Heart left ventricle (tissue), 16 donors: ENCODE measurements at regions of chr4 and their contacts with region 1.

Region 1: DNA sequence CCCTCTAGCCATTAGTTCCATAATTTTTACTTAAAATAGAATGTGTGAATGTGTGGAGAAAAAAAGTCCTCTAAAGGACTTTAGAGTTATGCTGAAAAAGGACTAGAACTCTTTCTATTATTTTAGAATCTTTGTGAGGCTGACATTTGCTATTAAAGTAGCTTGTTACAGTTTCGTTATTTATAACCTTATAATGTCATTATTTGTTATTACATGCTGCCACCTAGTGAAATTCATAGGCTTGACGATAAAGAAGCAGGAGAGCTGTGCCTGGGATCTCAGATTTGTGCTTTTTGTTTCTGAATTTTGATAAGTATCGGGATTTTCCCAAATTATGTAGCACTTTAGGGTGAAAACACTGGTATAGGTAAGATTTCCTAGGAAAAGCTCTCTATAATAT is 38.5 kb upstream of the TAPT1 start:
- DNase-seq: no peak
- ATAC-seq: peak; percentile 35 to 83 (median 58)
- H3K4me3 ChIP-seq: no peak overlapping the region
- H3K27ac ChIP-seq: no peak overlapping the region
- H3K4me1 ChIP-seq: peaks cover 0 to 13% (median 1%) of the 10 kb centered on the region in 12 donors
- H3K27me3 ChIP-seq: no peaks in the 10 kb centered on the region
- CTCF ChIP-seq: peak; percentile 36 to 79 (median 70)
- POLR2A ChIP-seq: no peak

Region 2: DNA sequence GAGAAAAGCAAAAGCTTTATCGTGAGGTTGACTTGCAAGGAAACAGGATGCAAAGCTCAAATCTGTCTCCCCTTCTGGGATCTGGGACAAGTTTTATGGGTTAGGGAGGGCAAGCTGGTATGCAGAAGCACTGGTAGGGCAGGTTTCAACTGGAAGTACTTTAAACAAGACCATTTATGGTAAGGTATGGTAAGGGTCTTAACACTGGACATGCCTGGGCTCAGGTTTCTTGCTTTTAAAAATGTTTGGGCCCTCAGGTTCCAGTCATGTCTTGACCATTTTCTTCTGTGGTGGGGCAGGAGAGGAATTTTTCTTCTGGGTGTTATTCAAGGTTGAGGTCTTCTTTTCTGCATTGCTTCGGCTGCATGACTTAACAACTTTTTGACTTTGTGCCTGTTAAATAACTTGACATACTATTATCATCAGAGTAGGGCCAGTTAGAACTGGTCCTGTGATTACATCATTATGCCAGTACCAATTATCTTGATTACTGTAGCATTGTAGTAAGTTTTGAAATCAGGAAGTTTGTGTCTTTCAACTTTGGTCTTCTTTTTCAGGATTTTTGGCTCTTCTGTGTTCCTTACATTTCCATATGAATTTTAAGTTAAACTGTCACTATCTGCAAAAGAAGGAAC is 453.0 kb before region 1 on chr4:
- intact Hi-C with region 1: loop called in 2 of 10 experiments (anchors 10 kb)
- DNase-seq: no peak
- ATAC-seq: no peak
- H3K4me3 ChIP-seq: no peak overlapping the region
- H3K27ac ChIP-seq: no peak overlapping the region
- H3K4me1 ChIP-seq: peaks cover 0 to 32% (median 0%) of the 10 kb centered on the region in 12 donors
- H3K27me3 ChIP-seq: no peaks in the 10 kb centered on the region
- CTCF ChIP-seq: no peak
- POLR2A ChIP-seq: no peak

Region 3: GRCh38 chr4:15882675-15883086 is 382.1 kb before region 1 on chr4:
- intact Hi-C with region 1: loop called in 8 of 10 experiments (anchors 2 to 10 kb)
- DNase-seq: peak in 4 of 5 donors; percentile 39 to 53 (median 42)
- ATAC-seq: peak; percentile 73 to 89 (median 85)
- H3K4me3 ChIP-seq: no peak overlapping the region
- H3K27ac ChIP-seq: no peak overlapping the region
- H3K4me1 ChIP-seq: peaks cover 0 to 3% (median 0%) of the 10 kb centered on the region in 12 donors
- H3K27me3 ChIP-seq: no peaks in the 10 kb centered on the region
- CTCF ChIP-seq: peak; percentile 74 to 92 (median 88)
- POLR2A ChIP-seq: no peak

Region 4: DNA sequence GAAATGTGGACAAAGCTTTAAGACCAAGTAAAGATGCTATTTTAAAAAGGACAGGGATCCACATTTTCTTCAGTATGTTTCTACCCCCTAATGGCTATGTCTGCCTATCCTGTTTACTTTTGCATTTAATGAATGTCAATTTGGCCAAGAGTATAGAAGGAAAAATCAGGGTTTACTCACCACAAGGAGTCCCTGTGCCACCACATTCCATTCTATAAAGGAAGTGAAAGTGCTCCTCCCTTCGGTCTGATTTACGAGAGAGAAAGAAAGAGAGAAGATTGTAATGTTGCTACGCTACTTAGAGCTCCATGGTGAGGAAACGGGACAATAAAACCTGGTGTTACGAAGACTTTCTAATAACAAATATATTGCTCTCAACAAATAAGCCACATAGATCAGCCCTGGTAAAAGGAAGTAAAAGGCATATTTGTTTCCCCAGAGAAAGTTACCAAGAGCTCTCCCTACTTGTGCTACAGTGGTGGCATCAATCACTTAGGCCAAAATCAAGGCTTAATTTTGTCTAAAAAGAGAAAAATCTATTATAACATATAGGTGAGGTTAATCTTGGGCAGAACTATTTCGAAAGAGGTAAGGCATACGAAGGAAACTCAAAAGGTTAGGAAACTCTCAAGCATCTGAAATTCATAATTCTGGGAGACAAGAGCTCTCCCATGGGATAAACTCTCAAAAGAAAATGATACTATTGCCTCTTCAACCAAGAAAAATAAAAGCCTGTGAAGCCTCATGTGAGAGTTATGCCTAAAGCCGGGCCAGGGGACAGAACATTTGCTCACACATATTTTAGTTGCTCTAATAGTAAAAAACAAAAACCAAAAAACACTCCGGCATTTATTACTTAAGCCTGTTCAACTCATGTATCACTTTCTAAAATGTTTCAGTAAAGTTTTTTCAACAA is 68.1 kb before region 1 on chr4:
- intact Hi-C with region 1: loop called (anchors 5 to 10 kb)
- DNase-seq: no peak
- ATAC-seq: peak; percentile 78 to 91 (median 88)
- H3K4me3 ChIP-seq: peak overlapping the region in 10 of 12 donors; percentile 11 to 49 (median 28)
- H3K27ac ChIP-seq: peak overlapping the region in 11 of 12 donors; percentile 12 to 66 (median 42)
- H3K4me1 ChIP-seq: peaks cover 0 to 57% (median 37%) of the 10 kb centered on the region in 12 donors
- H3K27me3 ChIP-seq: no peaks in the 10 kb centered on the region
- CTCF ChIP-seq: peak in 10 of 12 donors; percentile 0 to 66 (median 48)
- POLR2A ChIP-seq: no peak

Region 5: DNA sequence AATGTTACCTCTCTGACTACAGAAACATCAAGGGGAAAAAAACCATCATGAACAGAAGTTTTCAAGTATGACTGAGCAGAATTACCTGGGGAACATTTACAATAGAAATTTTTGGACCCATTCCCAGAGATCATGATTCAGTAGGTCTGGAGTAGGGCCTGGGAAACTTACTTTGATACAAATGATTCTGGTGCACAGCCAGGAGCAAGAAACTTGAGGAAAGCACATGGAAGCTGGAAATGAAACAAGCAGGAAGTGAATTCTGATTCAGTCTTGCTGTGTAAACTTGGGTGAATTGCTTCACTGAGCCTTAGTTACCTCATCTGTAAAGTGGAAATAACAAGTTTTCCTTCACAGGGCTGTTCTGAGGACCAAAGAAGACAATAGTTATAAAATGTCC is 154.0 kb after region 1 on chr4:
- intact Hi-C with region 1: no loop called
- DNase-seq: peak in 1 of 5 donors; percentile 19
- ATAC-seq: peak in 2 of 4 donors; percentile 54 to 87
- H3K4me3 ChIP-seq: no peak overlapping the region
- H3K27ac ChIP-seq: no peak overlapping the region
- H3K4me1 ChIP-seq: peaks cover 0 to 9% (median 0%) of the 10 kb centered on the region in 12 donors
- H3K27me3 ChIP-seq: no peaks in the 10 kb centered on the region
- CTCF ChIP-seq: no peak
- POLR2A ChIP-seq: no peak

Region 6: GRCh38 chr4:16438986-16439385 is 174.2 kb after region 1 on chr4:
- intact Hi-C with region 1: no loop called
- DNase-seq: no peak
- ATAC-seq: peak in 3 of 4 donors; percentile 51 to 84 (median 83)
- H3K4me3 ChIP-seq: peak overlapping the region in 1 of 12 donors; percentile 3
- H3K27ac ChIP-seq: peak overlapping the region in 6 of 12 donors; percentile 42 to 77 (median 66)
- H3K4me1 ChIP-seq: peaks cover 0 to 18% (median 0%) of the 10 kb centered on the region in 12 donors
- H3K27me3 ChIP-seq: no peaks in the 10 kb centered on the region
- CTCF ChIP-seq: no peak
- POLR2A ChIP-seq: no peak